ENCODE measurements at regions of chr11 and their contacts with region 1.

Region 1: DNA sequence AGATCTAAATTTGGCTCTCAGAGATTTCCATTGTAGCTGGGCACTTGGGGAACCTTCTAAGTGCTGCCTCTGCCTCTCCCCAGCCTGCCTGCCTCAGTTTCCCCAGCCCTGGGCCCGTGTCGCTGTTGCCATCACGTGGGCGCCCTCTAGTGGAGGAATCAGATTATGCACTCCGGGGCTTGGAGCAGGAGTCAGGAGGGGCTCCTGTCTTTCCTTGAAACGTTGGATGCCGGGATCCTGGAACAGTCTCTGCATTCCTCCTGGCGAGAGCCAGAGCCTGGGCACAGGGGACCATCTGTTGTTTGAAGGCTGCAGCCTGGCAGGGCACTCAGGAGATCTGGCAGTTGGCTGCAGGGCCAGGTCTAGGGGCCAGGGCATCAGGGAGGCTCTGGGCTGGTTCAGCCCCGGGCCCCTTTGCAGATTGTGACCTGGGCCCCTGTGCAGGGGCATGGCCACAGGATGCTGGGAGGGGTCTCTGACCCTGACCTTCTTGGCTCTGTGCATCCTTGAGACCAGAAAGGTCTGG is 71.6 kb downstream of the LRP5 start:
- DNase-seq: peak in 1 of 2 experiments; percentile 61
- H3K4me3 ChIP-seq: no peak overlapping the region
- H3K27ac ChIP-seq: no peak overlapping the region
- H3K4me1 ChIP-seq: peaks cover 29% of the 10 kb centered on the region
- H3K27me3 ChIP-seq: no peaks in the 10 kb centered on the region
- CTCF ChIP-seq: peak; percentile 100

Region 2: GRCh38 chr11:68257475-68258362 is 126.3 kb before region 1 on chr11:
- CTCF ChIA-PET with region 1: no interaction called
- POLR2A ChIA-PET with region 1: interaction called, 5 read pairs
- intact Hi-C with region 1: loop called (anchors 1 kb)
- DNase-seq: peak; percentile 86 to 96
- H3K4me3 ChIP-seq: no peak overlapping the region
- H3K27ac ChIP-seq: no peak overlapping the region
- H3K4me1 ChIP-seq: no peaks in the 10 kb centered on the region; the same call in 1 of the 2 replicates
- H3K27me3 ChIP-seq: no peaks in the 10 kb centered on the region
- CTCF ChIP-seq: peak; percentile 95

Region 3: DNA sequence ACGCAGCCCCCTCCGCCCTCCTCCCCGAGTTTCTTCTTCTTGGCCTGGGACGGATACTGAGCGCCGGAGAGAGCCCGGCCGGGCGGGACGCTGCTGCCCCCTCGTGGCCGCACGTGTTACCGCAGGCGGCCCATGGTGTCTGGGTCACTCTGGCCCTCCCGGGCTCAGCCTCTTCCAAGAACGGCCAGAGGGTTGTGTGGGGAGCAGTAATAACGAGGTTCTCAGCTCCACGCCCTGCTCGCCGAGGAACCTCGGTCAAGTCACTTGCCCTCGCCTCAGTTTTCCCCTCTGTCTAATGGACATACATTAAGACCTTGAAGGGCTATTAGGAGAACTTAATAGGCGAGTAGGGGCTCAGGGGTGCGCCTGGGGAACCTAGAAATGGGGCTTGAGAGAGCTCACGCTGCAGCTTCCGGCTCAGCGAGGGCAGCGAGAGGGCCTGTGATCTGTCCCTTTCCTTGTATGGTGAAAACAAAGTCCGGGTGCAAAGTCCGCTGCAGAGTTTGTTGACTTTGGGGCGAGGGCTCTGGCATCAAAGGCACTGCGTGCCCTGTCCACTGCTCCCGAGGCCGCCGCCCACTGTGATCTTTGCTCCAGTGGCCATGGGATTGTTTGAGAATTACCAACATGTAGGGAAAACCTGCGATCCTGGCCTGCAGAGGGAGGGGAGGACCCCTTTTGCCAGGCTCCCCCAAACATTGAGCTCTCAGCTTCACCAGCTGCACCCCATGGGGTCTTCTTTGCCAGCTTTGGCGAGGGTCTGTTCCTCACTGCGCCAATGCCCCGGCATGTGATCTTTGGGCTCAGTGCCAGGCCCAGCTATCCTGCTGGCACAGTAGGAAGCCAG is 86.0 kb before region 1 on chr11:
- CTCF ChIA-PET with region 1: interaction called, 3 read pairs
- POLR2A ChIA-PET with region 1: no interaction called
- intact Hi-C with region 1: loop called (anchors 2 kb)
- DNase-seq: peak; percentile 58 to 83
- H3K4me3 ChIP-seq: no peak overlapping the region
- H3K27ac ChIP-seq: no peak overlapping the region
- H3K4me1 ChIP-seq: peaks cover 15% of the 10 kb centered on the region
- H3K27me3 ChIP-seq: no peaks in the 10 kb centered on the region
- CTCF ChIP-seq: peak; percentile 98

Region 4: GRCh38 chr11:68342459-68343158 is 41.4 kb before region 1 on chr11:
- CTCF ChIA-PET with region 1: no interaction called
- POLR2A ChIA-PET with region 1: interaction called, 6 read pairs
- intact Hi-C with region 1: loop called (anchors 1 kb)
- DNase-seq: peak; percentile 96 to 99
- H3K4me3 ChIP-seq: peak overlapping the region; percentile 44; the same call in 1 of the 2 replicates
- H3K27ac ChIP-seq: peak overlapping the region; percentile 89
- H3K4me1 ChIP-seq: peaks cover 74% of the 10 kb centered on the region
- H3K27me3 ChIP-seq: no peaks in the 10 kb centered on the region
- CTCF ChIP-seq: no peak